ENCODE measurements at regions of chr18 and their contacts with region 1.

Region 1: DNA sequence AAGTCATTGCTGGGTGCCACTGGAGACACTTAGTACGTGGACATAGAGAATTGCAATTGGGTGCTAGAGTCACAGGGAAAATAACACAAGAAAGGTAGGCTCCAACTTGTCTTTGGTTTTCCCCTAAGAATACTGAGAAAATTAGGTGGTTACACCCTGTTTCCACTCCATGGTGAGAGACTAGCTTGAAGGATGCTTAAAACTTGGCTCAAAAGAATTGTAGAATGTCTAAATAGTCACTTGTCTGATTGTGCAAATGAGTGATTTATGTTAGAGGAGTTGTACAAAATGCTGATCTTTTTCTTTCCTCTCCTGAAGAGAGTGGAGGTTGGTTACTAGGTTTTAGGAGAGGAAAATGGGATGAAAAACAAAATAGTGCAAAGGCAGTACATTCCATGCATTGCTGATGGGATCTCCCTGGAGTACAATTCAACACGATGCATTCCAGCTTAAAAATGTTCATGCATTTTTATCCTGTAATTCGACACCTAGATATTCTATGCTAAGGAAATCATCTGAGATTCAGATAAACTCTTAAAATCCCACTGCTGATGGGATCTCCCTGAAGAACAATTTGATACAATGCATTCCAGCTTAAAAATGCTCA is 2.2 kb upstream of the SERPINB12 start:
- DNase-seq: no peak
- ATAC-seq: no peak
- H3K4me3 ChIP-seq: no peak overlapping the region
- H3K27ac ChIP-seq: no peak overlapping the region
- H3K4me1 ChIP-seq: no peaks in the 10 kb centered on the region
- H3K27me3 ChIP-seq: no peaks in the 10 kb centered on the region
- CTCF ChIP-seq: no peak
- POLR2A ChIP-seq: no peak

Region 2: GRCh38 chr18:63664571-63664970 is 124.6 kb after region 1 on chr18:
- intact Hi-C with region 1: loop called in 1 of 10 experiments (anchors 5 kb)
- DNase-seq: no peak
- ATAC-seq: no peak
- H3K4me3 ChIP-seq: no peak overlapping the region
- H3K27ac ChIP-seq: no peak overlapping the region
- H3K4me1 ChIP-seq: no peaks in the 10 kb centered on the region
- H3K27me3 ChIP-seq: no peaks in the 10 kb centered on the region
- CTCF ChIP-seq: no peak
- POLR2A ChIP-seq: no peak